Right ventricle myocardium inferior (tissue), 1 donor: ENCODE measurements at regions of chr12 and their contacts with region 1.

Region 1: DNA sequence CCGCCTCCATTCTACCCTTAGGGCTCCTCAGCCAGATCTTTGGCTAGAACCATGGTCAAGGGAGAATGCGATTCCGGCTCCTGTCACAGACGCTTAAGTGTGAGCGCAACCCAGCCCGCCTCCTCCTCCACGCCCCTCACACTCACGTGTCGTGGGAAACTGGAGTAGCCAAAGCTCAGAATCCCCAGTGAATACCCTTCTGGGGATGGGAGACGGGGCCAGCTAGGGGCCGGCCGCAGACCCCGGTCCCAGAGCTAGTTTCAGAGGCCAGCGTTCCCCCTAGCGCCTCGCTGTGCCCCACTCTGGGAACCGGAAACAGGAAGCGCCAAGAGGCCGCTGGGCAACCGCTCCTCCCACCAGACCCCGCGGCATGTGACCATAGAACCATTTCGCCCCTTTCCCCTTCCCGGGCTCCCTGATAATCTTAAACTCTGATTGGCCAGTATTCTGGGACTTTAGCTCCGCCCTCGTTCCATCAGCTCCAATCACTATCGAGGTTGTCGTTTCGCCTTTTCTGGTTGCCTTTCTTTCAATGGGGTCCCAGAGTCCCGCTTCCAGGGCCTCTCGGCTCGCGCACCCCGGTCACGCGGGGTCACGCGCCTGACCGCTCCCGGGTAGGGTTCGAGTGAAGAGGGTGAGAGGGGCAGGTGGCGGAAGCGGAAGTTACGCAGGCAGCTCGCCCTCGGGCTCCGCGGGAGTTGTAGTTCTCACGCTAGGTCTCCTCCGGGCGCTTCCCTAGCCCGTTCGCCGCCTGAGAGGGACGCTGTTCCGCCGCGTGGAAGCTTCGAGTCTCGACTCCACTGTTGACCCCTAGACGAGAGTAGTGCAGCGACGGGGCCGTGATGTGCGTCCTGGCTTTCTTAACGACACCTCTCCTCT is at the start of gene M6PR:
- DNase-seq: peak; percentile 96
- ATAC-seq: peak; percentile 97
- total RNA-seq, gene M6PR: 83.0 TPM

Region 2: DNA sequence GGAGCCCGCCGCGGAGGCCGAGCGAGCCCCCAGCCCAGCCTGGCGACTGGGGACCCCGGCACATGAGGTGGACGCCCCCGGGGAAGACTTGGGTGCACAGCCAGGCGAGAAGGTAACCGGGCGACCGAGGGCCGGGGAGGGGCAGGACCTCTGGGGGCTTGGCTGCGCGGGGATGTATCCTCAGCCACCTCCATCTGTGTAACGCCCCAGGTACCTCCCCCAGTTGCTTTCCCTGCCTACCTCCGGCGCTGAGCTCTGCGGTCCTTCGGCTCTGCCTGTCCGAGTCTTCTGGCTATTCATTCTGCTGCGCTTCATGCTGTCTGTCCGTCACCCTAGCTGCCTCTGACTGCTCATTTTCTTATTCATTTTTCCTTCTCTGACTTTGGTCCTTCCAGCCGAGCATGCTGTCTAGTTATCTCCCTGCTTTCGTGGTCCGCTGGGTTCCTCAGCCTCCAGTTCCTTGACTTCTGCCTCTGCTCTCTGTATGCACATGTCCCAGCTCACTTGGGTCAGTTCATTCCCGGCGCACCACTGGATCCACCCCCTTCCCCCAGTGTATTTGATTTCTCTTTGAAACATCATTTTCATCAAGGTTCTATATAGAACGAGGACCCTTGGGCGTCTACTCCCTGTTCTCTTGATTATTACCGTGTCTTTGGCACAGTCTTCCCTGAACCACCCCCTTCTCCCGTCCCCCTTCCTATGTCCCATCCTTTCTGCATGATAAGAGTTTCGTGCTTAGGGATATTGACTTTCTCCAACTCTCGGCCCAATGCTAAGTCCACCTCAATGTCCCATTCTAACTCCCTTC is 34.7 kb before region 1 on chr12:
- intact Hi-C with region 1: loop called (anchors 2 kb)
- DNase-seq: peak; percentile 70
- ATAC-seq: peak; percentile 58

Region 3: GRCh38 chr12:9039397-9039977 is 89.9 kb after region 1 on chr12:
- intact Hi-C with region 1: loop called (anchors 2 kb)
- DNase-seq: no peak
- ATAC-seq: no peak

Region 4: GRCh38 chr12:9118158-9118557 is 168.6 kb after region 1 on chr12:
- intact Hi-C with region 1: loop called (anchors 10 kb)
- DNase-seq: no peak
- ATAC-seq: peak; percentile 61